G401 (cell line): ENCODE measurements at regions of chr21 and their contacts with region 1.

Region 1: DNA sequence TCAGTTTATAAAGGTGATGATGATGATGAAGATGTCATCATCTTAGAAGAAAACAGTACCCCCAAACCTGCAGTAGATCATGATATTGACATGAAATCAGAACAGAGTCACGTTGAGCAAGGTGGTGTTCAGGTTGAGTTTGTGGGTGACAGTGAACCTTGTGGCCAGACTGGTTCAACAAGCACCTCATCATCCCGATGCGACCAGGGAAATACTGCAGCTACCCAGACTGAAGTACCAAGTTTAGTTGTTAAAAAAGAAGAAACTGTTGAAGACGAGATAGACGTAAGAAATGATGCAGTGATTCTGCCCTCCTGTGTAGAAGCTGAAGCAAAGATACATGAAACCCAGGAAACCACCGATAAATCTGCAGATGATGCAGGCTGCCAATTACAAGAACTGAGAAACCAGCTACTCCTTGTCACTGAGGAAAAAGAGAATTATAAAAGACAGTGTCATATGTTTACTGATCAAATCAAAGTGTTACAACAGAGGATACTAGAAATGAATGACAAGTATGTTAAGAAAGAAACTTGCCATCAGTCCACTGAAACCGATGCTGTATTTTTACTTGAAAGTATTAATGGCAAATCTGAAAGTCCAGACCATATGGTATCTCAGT is 16.0 kb upstream of the CHAF1B start:
- DNase-seq: no peak

Region 2: GRCh38 chr21:36260030-36260787 is 109.0 kb before region 1 on chr21:
- in situ Hi-C with region 1: loop called (anchors 10 kb)
- DNase-seq: peak; percentile 65